ENCODE measurements at regions of chr12 and their contacts with region 1.

Region 1: GRCh38 chr12:63843721-63844390 is 644 bp upstream of the SRGAP1 start:
- DNase-seq: peak; percentile 86
- ATAC-seq: peak; percentile 88
- H3K4me3 ChIP-seq: peak overlapping the region; percentile 77 to 97
- H3K27ac ChIP-seq: peak overlapping the region; percentile 80
- H3K4me1 ChIP-seq: peaks cover 7 to 25% of the 10 kb centered on the region in 2 experiments; a peak in 3 of 4 replicates
- H3K27me3 ChIP-seq: no peaks in the 10 kb centered on the region
- CTCF ChIP-seq: peak; percentile 72 to 96 (median 87)
- POLR2A ChIP-seq: no peak
- RAD21 ChIP-seq: peak; percentile 99

Region 2: GRCh38 chr12:63917864-63918799 is 74.3 kb after region 1 on chr12:
- CTCF ChIA-PET with region 1: no interaction called
- POLR2A ChIA-PET with region 1: no interaction called
- RAD21 ChIA-PET with region 1: no interaction called
- intact Hi-C with region 1: loop called (anchors 2 kb)
- DNase-seq: peak; percentile 91
- ATAC-seq: peak; percentile 65
- H3K4me3 ChIP-seq: peak overlapping the region; percentile 3 to 40; a peak in 3 of 4 replicates
- H3K27ac ChIP-seq: peak overlapping the region; percentile 91
- H3K4me1 ChIP-seq: peaks cover 83 to 93% of the 10 kb centered on the region in 2 experiments
- H3K27me3 ChIP-seq: no peaks in the 10 kb centered on the region
- CTCF ChIP-seq: no peak
- POLR2A ChIP-seq: no peak
- RAD21 ChIP-seq: peak; percentile 34; the same call in 1 of the 2 replicates

Region 3: DNA sequence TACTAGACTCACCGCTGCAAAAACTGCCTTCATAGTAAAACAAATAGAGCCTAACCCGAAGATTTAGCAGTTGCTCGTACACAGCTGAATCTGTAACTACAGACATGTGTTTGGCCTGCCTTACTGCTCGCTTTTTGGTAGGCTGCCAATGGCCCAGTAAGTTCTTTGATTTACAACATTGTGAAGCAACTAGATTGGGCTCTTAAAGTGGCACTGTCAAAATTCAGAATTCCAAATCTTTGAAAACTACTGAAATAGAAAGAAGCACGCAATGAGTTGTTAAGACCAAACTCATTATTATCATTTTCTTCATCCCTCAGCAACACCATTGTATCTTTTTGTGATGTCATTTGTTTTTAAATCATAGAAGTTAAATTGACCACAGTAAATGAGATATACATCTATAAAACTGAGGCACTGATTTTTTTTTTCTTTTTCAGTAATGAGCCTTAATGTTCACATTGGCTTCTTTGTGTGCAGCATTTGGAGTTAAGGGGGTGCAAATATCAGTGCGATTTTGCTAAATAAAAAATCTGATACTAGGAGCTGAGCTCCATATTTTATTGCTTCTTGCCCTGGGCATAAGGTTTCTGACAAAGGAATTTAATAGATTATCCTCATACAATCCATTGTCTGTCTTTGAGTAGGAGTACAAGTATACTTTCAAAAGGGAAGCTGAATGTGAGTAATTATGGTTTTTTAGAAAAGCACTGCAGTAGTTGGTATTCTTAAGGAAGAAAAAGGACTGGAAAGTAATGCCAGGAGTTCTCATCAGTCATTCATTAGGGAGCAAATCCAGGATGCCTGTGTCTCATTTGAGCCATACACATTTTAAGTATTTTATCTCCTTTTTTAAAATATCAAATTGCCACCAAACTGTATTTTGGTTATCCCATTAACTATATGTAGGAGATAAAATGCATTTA is 239.7 kb after region 1 on chr12:
- CTCF ChIA-PET with region 1: interaction called, 3 read pairs
- POLR2A ChIA-PET with region 1: no interaction called
- RAD21 ChIA-PET with region 1: no interaction called
- intact Hi-C with region 1: loop called (anchors 5 kb)
- DNase-seq: no peak
- ATAC-seq: no peak
- H3K4me3 ChIP-seq: no peak overlapping the region
- H3K27ac ChIP-seq: 0 out of 2 replicates have a peak overlapping the region, but pooled peaks have one; percentile 15
- H3K4me1 ChIP-seq: peaks cover 59 to 60% of the 10 kb centered on the region in 2 experiments
- H3K27me3 ChIP-seq: no peaks in the 10 kb centered on the region
- CTCF ChIP-seq: no peak
- POLR2A ChIP-seq: no peak
- RAD21 ChIP-seq: no peak

Region 4: GRCh38 chr12:64236549-64236948 is 392.7 kb after region 1 on chr12:
- CTCF ChIA-PET with region 1: interaction called, 10 read pairs
- POLR2A ChIA-PET with region 1: no interaction called
- RAD21 ChIA-PET with region 1: no interaction called
- intact Hi-C with region 1: loop called (anchors 1 kb)
- DNase-seq: peak; percentile 10
- ATAC-seq: peak; percentile 74
- H3K4me3 ChIP-seq: no peak overlapping the region
- H3K27ac ChIP-seq: no peak overlapping the region
- H3K4me1 ChIP-seq: no peaks in the 10 kb centered on the region
- H3K27me3 ChIP-seq: no peaks in the 10 kb centered on the region
- CTCF ChIP-seq: peak; percentile 7 to 57 (median 12); a peak in 2 of 6 replicates
- POLR2A ChIP-seq: no peak
- RAD21 ChIP-seq: peak; percentile 76

Region 5: DNA sequence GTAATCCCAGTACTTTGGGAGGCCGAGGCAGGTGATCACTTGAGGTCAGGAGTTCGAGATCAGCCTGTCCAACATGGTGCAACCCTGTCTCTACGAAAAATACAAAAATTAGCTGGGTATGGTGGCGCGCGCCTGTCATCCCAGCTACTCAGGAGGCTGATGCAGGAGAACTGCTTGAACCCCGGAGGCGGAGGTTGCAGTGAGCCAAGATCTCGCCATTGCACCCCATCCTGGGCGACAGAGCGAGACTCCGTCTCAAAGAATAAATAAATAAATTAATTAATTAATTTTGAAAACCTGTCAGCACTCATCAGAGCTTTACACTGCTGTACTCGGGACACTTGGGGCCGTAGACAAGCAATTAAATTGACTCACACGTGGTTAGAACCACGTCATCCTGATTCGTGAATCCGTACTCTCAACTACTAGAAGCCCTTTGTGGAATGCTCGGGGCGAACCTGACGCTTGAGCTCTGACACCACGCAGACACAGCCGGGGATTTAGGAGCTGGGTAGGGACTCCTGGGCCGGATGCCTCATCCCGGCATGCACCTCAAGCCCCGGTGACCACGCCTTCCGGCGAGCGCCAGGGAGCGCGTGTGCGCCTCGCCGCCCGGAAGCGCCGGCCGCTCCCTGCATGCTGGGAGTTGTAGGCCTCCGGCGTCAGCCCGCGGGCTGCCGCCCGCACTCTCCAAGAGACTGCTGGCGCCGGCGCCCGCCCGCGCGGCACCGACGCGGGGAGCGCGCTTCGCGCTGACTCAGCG is 560.0 kb after region 1 on chr12 and contains the start of gene XPOT:
- CTCF ChIA-PET with region 1: no interaction called
- POLR2A ChIA-PET with region 1: no interaction called
- RAD21 ChIA-PET with region 1: no interaction called
- intact Hi-C with region 1: loop called (anchors 5 kb)
- DNase-seq: peak; percentile 95
- ATAC-seq: peak; percentile 94
- H3K4me3 ChIP-seq: peak within 1 kb of the TSS; percentile 76 to 95
- H3K27ac ChIP-seq: peak within 1 kb of the TSS; percentile 96
- H3K4me1 ChIP-seq: peaks cover 0 to 28% of the 10 kb centered on the region in 2 experiments; a peak in 2 of 4 replicates
- H3K27me3 ChIP-seq: no peaks in the 10 kb centered on the region
- CTCF ChIP-seq: no peak
- POLR2A ChIP-seq: peak; percentile 96
- RAD21 ChIP-seq: no peak
- total RNA-seq, gene XPOT: 120 TPM